Adrenal gland (tissue), 19 donors: ENCODE measurements at regions of chr9 and their contacts with region 1.

Region 1: DNA sequence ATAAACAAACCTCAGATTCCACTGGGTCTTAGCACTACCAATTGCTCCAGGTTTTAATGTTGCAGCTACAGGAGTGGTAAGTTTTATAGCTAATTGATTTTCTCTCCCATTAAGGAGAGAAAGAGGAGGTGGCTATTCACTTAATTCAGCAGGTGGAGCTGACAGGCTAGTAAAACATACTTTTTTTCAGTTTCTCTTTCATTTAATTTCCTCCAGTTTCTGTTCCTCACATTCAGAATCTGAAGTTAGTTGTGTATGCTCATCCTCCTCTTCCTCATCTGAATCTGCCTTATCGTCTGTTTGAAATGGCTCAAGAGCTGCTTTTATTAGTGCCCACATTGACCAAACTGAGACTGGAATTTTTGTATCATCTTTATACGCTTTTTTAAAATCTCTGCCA is 98.0 kb downstream of the PLPPR1 start:
- DNase-seq: no peak
- H3K4me3 ChIP-seq: no peak overlapping the region
- H3K27ac ChIP-seq: no peak overlapping the region
- H3K4me1 ChIP-seq: peaks cover 0 to 4% of the 10 kb centered on the region in 2 donors
- H3K27me3 ChIP-seq: no peaks in the 10 kb centered on the region
- CTCF ChIP-seq: no peak
- POLR2A ChIP-seq: no peak

Region 2: GRCh38 chr9:101201630-101202029 is 75.1 kb after region 1 on chr9:
- intact Hi-C with region 1: loop called in 1 of 2 experiments (anchors 10 kb)
- DNase-seq: peak in 5 of 7 donors; percentile 18 to 52 (median 24)
- H3K4me3 ChIP-seq: no peak overlapping the region
- H3K27ac ChIP-seq: no peak overlapping the region
- H3K4me1 ChIP-seq: peaks cover 0 to 3% of the 10 kb centered on the region in 2 donors
- H3K27me3 ChIP-seq: no peaks in the 10 kb centered on the region
- CTCF ChIP-seq: no peak
- POLR2A ChIP-seq: no peak